ENCODE measurements at regions of chrX and their contacts with region 1.

Region 1: GRCh38 chrX:84729809-84730208 is 227.6 kb upstream of the HDX start:
- DNase-seq: peak in 4 of 9 donors; percentile 4 to 24 (median 14)
- ATAC-seq: peak; percentile 66
- H3K4me3 ChIP-seq: no peak overlapping the region
- H3K4me3 Mint-ChIP-seq: no peak overlapping the region
- H3K27ac ChIP-seq: no peak overlapping the region
- H3K27ac Mint-ChIP-seq: no peak overlapping the region
- H3K4me1 ChIP-seq: no peaks in the 10 kb centered on the region
- H3K4me1 Mint-ChIP-seq: no peaks in the 10 kb centered on the region
- H3K27me3 ChIP-seq: no peaks in the 10 kb centered on the region
- H3K27me3 Mint-ChIP-seq: no peaks in the 10 kb centered on the region

Region 2: GRCh38 chrX:83529950-83530349 is 1199.9 kb before region 1 on chrX:
- CTCF ChIA-PET with region 1: no interaction called
- POLR2A ChIA-PET with region 1: no interaction called
- intact Hi-C with region 1: no loop called
- DNase-seq: no peak
- ATAC-seq: no peak
- H3K4me3 ChIP-seq: no peak overlapping the region
- H3K4me3 Mint-ChIP-seq: no peak overlapping the region
- H3K27ac ChIP-seq: no peak overlapping the region
- H3K27ac Mint-ChIP-seq: no peak overlapping the region
- H3K4me1 ChIP-seq: no peaks in the 10 kb centered on the region
- H3K4me1 Mint-ChIP-seq: no peaks in the 10 kb centered on the region
- H3K27me3 ChIP-seq: no peaks in the 10 kb centered on the region
- H3K27me3 Mint-ChIP-seq: peaks cover 0 to 8% (median 0%) of the 10 kb centered on the region in 5 donors

Region 3: GRCh38 chrX:84747516-84747915 is 17.7 kb after region 1 on chrX:
- CTCF ChIA-PET with region 1: no interaction called
- POLR2A ChIA-PET with region 1: no interaction called
- intact Hi-C with region 1: no loop called
- DNase-seq: no peak
- ATAC-seq: no peak
- H3K4me3 ChIP-seq: no peak overlapping the region
- H3K4me3 Mint-ChIP-seq: no peak overlapping the region
- H3K27ac ChIP-seq: no peak overlapping the region
- H3K27ac Mint-ChIP-seq: no peak overlapping the region
- H3K4me1 ChIP-seq: no peaks in the 10 kb centered on the region
- H3K4me1 Mint-ChIP-seq: no peaks in the 10 kb centered on the region
- H3K27me3 ChIP-seq: no peaks in the 10 kb centered on the region
- H3K27me3 Mint-ChIP-seq: peaks cover 0 to 6% (median 0%) of the 10 kb centered on the region in 5 donors

Region 4: DNA sequence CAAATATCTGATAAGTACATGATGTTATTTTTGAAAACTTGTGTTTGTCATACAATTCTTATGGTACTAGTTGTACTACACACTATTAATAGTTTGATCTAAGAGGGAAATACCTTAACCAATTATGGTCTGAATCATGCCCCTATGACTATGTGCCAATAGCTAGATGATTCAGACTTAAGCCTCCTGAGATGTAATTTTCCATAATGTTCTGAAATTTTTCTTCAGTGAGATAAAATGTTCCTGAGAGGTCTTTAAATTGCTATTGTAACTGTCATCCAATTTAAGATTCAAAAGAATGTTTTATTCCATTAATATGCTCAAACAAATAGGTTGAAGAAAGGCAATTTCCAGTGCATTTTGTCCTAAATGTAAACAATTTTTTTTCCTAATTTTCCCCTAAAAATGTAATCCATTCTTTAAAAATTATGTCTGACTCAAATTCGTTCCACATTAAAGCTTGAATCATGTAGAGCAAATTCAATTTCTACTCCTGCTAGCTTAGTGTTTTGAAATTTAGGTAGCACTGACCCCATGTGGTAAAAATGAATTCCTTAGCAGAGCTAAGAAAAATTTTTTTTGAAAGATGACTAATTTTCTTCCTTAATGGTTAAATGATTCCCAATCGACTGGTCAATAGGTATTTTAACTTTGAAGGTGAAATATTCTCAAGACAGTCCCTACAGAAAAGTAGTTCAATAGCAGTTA is 323.0 kb after region 1 on chrX:
- CTCF ChIA-PET with region 1: no interaction called
- POLR2A ChIA-PET with region 1: no interaction called
- intact Hi-C with region 1: loop called in 1 of 2 experiments (anchors 5 kb)
- DNase-seq: no peak
- ATAC-seq: no peak
- H3K4me3 ChIP-seq: no peak overlapping the region
- H3K4me3 Mint-ChIP-seq: no peak overlapping the region
- H3K27ac ChIP-seq: no peak overlapping the region
- H3K27ac Mint-ChIP-seq: no peak overlapping the region
- H3K4me1 ChIP-seq: no peaks in the 10 kb centered on the region
- H3K4me1 Mint-ChIP-seq: no peaks in the 10 kb centered on the region
- H3K27me3 ChIP-seq: no peaks in the 10 kb centered on the region
- H3K27me3 Mint-ChIP-seq: no peaks in the 10 kb centered on the region

Measured in naive thymus-derived CD4-positive, alpha-beta T cell (primary cell).